Activated CD4-positive, alpha-beta memory T cell treated with anti-CD3 and anti-CD28 coated beads for 36 hours (primary cell): ENCODE measurements at regions of chr4 and their contacts with region 1.

Region 1: DNA sequence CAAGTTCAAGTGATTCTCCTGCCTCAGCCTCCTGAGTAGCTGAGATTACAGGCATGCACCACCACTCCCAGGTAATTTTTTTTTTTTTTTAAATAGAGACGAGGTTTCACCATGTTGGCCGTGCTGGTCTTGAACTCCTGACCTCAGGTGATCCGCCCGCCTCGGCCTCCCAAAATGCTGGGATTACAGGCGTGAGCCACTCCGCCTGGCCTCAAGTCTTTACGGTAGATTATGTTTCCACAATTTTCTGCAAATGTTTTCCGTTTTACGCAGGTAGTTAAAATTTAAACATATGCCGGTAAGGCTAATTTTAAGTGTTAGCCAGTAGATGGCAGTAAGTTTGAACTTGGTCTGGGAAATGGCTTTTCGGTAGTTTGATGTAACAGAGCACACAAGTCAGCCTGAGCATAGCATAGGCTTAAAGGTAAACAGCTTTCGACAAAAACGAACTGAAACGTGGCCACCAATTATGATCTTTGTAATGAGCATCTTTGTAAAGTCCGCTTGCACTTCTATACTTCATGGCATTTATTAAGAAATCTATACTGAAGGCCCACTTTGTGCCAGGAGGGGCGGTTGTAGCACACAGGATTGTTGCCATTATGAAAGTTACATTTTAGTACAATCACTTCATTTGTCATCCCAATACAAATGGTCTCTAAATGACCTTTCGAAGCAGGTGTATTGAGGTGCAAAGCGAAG is 31.1 kb downstream of the CCKAR start:
- DNase-seq: no peak
- H3K4me3 Mint-ChIP-seq: peak overlapping the region; percentile 33
- H3K27ac Mint-ChIP-seq: no peak overlapping the region
- H3K4me1 Mint-ChIP-seq: peaks cover 10% of the 10 kb centered on the region
- H3K27me3 Mint-ChIP-seq: no peaks in the 10 kb centered on the region

Region 2: GRCh38 chr4:25477221-25477620 is 982.0 kb before region 1 on chr4:
- CTCF ChIA-PET with region 1: no interaction called
- POLR2A ChIA-PET with region 1: no interaction called
- intact Hi-C with region 1: no loop called
- DNase-seq: no peak
- H3K4me3 Mint-ChIP-seq: no peak overlapping the region
- H3K27ac Mint-ChIP-seq: no peak overlapping the region
- H3K4me1 Mint-ChIP-seq: no peaks in the 10 kb centered on the region
- H3K27me3 Mint-ChIP-seq: no peaks in the 10 kb centered on the region

Region 3: DNA sequence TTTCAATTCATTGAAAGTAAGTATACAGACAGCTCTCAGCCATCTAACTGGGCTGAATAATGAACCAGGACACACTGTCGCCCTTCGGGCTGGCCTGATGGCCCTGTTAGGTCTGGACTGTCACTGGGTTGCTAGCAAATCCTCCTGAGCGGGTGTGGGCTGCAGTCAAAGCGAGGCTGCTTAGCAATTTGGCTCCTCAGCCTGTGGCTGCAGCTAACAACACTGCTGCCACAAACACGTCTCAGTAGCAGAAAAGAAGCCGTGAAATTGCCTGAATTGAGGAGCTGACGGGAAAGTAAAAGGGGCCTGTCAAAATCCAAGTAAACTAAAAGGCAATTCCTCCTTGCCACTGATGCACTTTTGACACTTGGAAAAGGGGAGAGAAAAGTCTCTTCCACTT is 472.4 kb before region 1 on chr4:
- CTCF ChIA-PET with region 1: interaction called, 3 read pairs
- POLR2A ChIA-PET with region 1: no interaction called
- intact Hi-C with region 1: loop called (anchors 5 kb)
- DNase-seq: no peak
- H3K4me3 Mint-ChIP-seq: no peak overlapping the region
- H3K27ac Mint-ChIP-seq: no peak overlapping the region
- H3K4me1 Mint-ChIP-seq: peaks cover 5% of the 10 kb centered on the region
- H3K27me3 Mint-ChIP-seq: no peaks in the 10 kb centered on the region

Region 4: DNA sequence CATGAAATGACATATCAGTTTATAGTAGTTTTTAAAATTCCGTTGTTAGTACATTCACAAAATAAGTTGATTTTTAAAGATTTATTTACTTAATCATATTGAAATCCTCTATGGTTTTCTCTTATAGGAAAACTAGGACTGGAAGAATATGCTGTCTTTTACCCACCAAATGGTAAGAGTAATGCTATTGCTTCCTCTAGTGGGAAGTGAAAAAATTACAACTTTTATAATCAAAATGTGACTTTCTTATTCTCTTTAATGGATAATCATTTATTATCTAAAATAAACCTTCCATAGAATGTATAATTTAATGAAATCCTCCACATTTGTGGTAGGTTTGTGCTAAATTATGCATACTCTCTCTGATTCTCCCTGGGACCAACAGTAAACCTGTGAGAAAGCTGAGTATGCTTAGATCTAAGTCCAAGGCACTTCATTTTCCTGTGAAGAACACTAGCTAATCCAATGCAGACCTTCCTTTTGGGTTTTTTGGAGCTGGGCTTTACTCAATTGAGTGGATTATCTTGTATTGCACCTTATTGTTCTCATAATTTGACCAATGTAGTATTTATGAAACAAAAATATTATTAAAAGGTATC is 260.8 kb after region 1 on chr4:
- CTCF ChIA-PET with region 1: interaction called, 5 read pairs
- POLR2A ChIA-PET with region 1: no interaction called
- intact Hi-C with region 1: loop called (anchors 2 kb)
- DNase-seq: no peak
- H3K4me3 Mint-ChIP-seq: no peak overlapping the region
- H3K27ac Mint-ChIP-seq: no peak overlapping the region
- H3K4me1 Mint-ChIP-seq: no peaks in the 10 kb centered on the region
- H3K27me3 Mint-ChIP-seq: no peaks in the 10 kb centered on the region

Region 5: GRCh38 chr4:27010334-27010940 is 551.2 kb after region 1 on chr4:
- CTCF ChIA-PET with region 1: interaction called, 21 read pairs
- POLR2A ChIA-PET with region 1: no interaction called
- intact Hi-C with region 1: loop called (anchors 1 kb)
- DNase-seq: peak; percentile 67
- H3K4me3 Mint-ChIP-seq: no peak overlapping the region
- H3K27ac Mint-ChIP-seq: no peak overlapping the region
- H3K4me1 Mint-ChIP-seq: peaks cover 18% of the 10 kb centered on the region
- H3K27me3 Mint-ChIP-seq: no peaks in the 10 kb centered on the region

Region 6: GRCh38 chr4:27024805-27025204 is 565.6 kb after region 1 on chr4:
- CTCF ChIA-PET with region 1: no interaction called
- POLR2A ChIA-PET with region 1: no interaction called
- intact Hi-C with region 1: loop called (anchors 5 kb)
- DNase-seq: no peak
- H3K4me3 Mint-ChIP-seq: no peak overlapping the region
- H3K27ac Mint-ChIP-seq: no peak overlapping the region
- H3K4me1 Mint-ChIP-seq: peaks cover 8% of the 10 kb centered on the region
- H3K27me3 Mint-ChIP-seq: no peaks in the 10 kb centered on the region